Activated naive CD4-positive, alpha-beta T cell treated with anti-CD3 and anti-CD28 coated beads for 36 hours (primary cell): ENCODE measurements at regions of chr2 and their contacts with region 1.

Region 1: GRCh38 chr2:224585205-224586088 is at the start of gene CUL3:
- DNase-seq: peak; percentile 100
- H3K4me3 Mint-ChIP-seq: peak within 1 kb of the TSS; percentile 92
- H3K27ac Mint-ChIP-seq: peak within 1 kb of the TSS; percentile 89
- H3K4me1 Mint-ChIP-seq: peaks cover 31% of the 10 kb centered on the region
- H3K27me3 Mint-ChIP-seq: no peaks in the 10 kb centered on the region
- total RNA-seq, gene CUL3: 61.7 to 66.0 TPM

Region 2: GRCh38 chr2:224025874-224026273 is 559.6 kb before region 1 on chr2:
- CTCF ChIA-PET with region 1: no interaction called
- intact Hi-C with region 1: loop called (anchors 1 kb)
- DNase-seq: peak; percentile 84
- H3K4me3 Mint-ChIP-seq: peak overlapping the region; percentile 64
- H3K27ac Mint-ChIP-seq: peak overlapping the region; percentile 95
- H3K4me1 Mint-ChIP-seq: peaks cover 84% of the 10 kb centered on the region
- H3K27me3 Mint-ChIP-seq: no peaks in the 10 kb centered on the region

Region 3: DNA sequence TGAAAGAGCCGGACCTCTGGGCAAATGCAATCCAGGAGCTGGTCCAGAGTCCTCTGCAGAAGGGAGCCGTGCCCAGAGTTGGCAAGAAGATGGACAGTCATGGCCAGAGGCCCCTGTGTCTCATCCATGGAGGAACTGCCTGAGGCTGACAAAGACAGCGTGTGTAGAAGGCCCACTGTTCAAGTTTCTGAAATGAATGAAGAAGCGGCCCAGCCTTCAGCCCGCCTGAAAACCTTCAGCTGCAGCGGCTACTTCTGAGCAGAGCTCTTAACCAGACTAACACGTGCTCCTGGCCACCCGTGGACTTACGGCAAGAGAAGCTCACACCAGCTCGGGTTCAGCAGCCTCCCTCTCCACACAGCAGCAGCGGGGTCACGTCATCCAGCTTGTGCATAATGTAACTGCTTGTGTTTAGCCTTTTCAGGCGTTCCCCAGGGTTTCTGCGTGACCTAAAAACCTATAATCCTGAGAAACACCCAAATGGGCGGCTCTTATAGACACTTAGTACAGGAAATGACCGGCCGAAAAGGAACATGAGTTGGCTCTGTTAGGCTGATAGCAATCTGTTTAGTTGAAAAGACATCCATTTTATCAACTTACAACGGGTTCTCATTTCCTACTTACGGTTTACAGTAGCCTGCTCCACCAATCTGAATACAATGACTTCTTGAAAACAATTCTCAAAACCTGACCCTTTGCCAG is 183.7 kb before region 1 on chr2 and contains the start of gene FAM124B:
- CTCF ChIA-PET with region 1: no interaction called
- intact Hi-C with region 1: loop called (anchors 1 kb)
- DNase-seq: peak; percentile 71
- H3K4me3 Mint-ChIP-seq: peak within 1 kb of the TSS; percentile 70
- H3K27ac Mint-ChIP-seq: peak within 1 kb of the TSS; percentile 46
- H3K4me1 Mint-ChIP-seq: peaks cover 13% of the 10 kb centered on the region
- H3K27me3 Mint-ChIP-seq: peaks cover 8% of the 10 kb centered on the region
- total RNA-seq, gene FAM124B: 0.32 to 0.43 TPM

Region 4: DNA sequence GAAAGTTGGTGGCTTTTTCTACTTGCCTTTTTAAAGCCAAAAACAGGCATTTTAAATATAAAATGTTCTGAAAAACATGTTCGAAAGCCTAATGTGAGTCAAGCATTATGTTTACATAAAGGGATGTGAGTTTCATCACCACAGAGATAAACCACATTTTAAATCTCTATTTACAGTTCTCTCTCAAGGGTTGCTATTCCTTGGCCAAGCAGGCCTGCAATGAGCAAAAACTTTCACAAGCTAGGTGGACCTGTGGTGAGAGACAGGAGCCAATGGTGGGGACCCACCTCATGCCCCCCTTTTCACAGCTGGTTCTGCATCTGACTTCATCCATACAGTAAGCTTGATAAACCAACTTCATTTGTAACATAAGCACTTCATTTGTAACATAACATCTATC is 65.4 kb before region 1 on chr2:
- CTCF ChIA-PET with region 1: interaction called, 3 read pairs
- intact Hi-C with region 1: loop called (anchors 1 kb)
- DNase-seq: peak; percentile 64
- H3K4me3 Mint-ChIP-seq: no peak overlapping the region
- H3K27ac Mint-ChIP-seq: peak overlapping the region; percentile 24
- H3K4me1 Mint-ChIP-seq: peaks cover 58% of the 10 kb centered on the region
- H3K27me3 Mint-ChIP-seq: no peaks in the 10 kb centered on the region

Region 5: GRCh38 chr2:224601923-224602322 is 16.5 kb after region 1 on chr2:
- CTCF ChIA-PET with region 1: interaction called, 3 read pairs
- intact Hi-C with region 1: loop called (anchors 1 kb)
- DNase-seq: no peak
- H3K4me3 Mint-ChIP-seq: no peak overlapping the region
- H3K27ac Mint-ChIP-seq: no peak overlapping the region
- H3K4me1 Mint-ChIP-seq: peaks cover 18% of the 10 kb centered on the region
- H3K27me3 Mint-ChIP-seq: peaks cover 2% of the 10 kb centered on the region

Region 6: GRCh38 chr2:224638301-224638823 is 52.9 kb after region 1 on chr2:
- CTCF ChIA-PET with region 1: no interaction called
- intact Hi-C with region 1: loop called (anchors 1 kb)
- DNase-seq: peak; percentile 58
- H3K4me3 Mint-ChIP-seq: peak overlapping the region; percentile 26
- H3K27ac Mint-ChIP-seq: peak overlapping the region; percentile 89
- H3K4me1 Mint-ChIP-seq: peaks cover 12% of the 10 kb centered on the region
- H3K27me3 Mint-ChIP-seq: no peaks in the 10 kb centered on the region

Region 7: GRCh38 chr2:224723586-224724217 is 138.3 kb after region 1 on chr2:
- CTCF ChIA-PET with region 1: no interaction called
- intact Hi-C with region 1: no loop called
- DNase-seq: no peak
- H3K4me3 Mint-ChIP-seq: no peak overlapping the region
- H3K27ac Mint-ChIP-seq: no peak overlapping the region
- H3K4me1 Mint-ChIP-seq: no peaks in the 10 kb centered on the region
- H3K27me3 Mint-ChIP-seq: peaks cover 2% of the 10 kb centered on the region

Region 8: GRCh38 chr2:225008935-225009334 is 423.5 kb after region 1 on chr2:
- CTCF ChIA-PET with region 1: no interaction called
- intact Hi-C with region 1: loop called (anchors 5 kb)
- DNase-seq: peak; percentile 47
- H3K4me3 Mint-ChIP-seq: no peak overlapping the region
- H3K27ac Mint-ChIP-seq: no peak overlapping the region
- H3K4me1 Mint-ChIP-seq: peaks cover 92% of the 10 kb centered on the region
- H3K27me3 Mint-ChIP-seq: no peaks in the 10 kb centered on the region